K562 (cell line): ENCODE measurements at regions of chr1 and their contacts with region 1.

Region 1: DNA sequence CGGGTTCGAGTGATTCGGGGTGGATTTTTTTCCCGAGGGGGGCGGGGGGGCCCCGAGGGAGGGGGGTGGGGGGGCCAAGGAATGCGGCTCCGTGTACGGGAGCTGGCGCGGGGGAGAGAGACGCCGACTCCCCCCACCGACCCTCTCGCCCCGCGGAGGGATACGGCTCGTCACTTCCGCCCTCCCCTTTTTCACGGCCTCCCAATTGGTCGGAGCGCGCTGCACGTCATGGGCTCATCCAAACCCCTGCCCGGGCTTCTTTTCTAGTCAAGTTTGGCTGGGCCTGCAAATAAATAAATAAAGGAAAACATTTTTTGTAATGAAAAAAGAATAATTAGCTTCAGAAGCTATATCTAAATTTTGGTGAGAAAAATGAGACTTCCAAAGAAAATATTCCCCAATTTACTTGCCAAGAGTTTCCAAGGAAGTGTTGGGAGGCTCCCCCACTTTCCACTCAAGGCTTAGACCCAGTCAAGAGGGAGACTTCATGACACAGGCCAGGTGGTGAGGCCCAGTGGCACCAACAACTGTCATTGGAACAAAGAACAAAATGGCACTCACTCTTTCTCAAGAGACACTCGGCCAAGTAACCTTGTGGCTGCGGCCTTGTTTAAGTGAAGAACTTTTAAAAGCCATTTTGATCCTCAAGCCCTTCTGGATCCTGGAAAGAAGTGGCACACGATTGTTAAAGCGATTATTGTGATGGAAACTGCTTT is at the start of gene POGZ:
- DNase-seq: peak; percentile 89 to 96 (median 93)
- ATAC-seq: peak; percentile 88
- H3K4me3 ChIP-seq: peak within 1 kb of the TSS; percentile 59
- H3K27ac ChIP-seq: peak within 1 kb of the TSS; percentile 90
- H3K4me1 ChIP-seq: peaks cover 0 to 20% of the 10 kb centered on the region in 2 experiments; a peak in 4 of 5 replicates
- H3K27me3 ChIP-seq: no peaks in the 10 kb centered on the region
- CTCF ChIP-seq: no peak
- EP300 ChIP-seq: no peak
- POLR2A ChIP-seq: no peak; the same call in 1 of the 2 replicates
- RAD21 ChIP-seq: no peak
- polyA plus RNA-seq, gene POGZ: 9.4 to 13.7 TPM

Region 2: GRCh38 chr1:151443846-151444782 is 15.4 kb before region 1 on chr1:
- CTCF ChIA-PET with region 1: no interaction called
- POLR2A ChIA-PET with region 1: interaction called, 12 read pairs
- in situ Hi-C with region 1: no loop called
- intact Hi-C with region 1: no loop called
- DNase-seq: peak; percentile 54 to 73 (median 62)
- ATAC-seq: peak; percentile 96
- H3K4me3 ChIP-seq: no peak overlapping the region
- H3K27ac ChIP-seq: no peak overlapping the region
- H3K4me1 ChIP-seq: peaks cover 0 to 3% of the 10 kb centered on the region in 2 experiments; a peak in 2 of 5 replicates
- H3K27me3 ChIP-seq: no peaks in the 10 kb centered on the region
- CTCF ChIP-seq: peak; percentile 71 to 88 (median 78)
- EP300 ChIP-seq: no peak
- POLR2A ChIP-seq: no peak
- RAD21 ChIP-seq: peak; percentile 82 to 83

Region 3: GRCh38 chr1:151472856-151473731 is 13.6 kb after region 1 on chr1:
- CTCF ChIA-PET with region 1: no interaction called
- POLR2A ChIA-PET with region 1: interaction called, 13 read pairs
- in situ Hi-C with region 1: no loop called
- intact Hi-C with region 1: loop called (anchors 1 kb)
- DNase-seq: peak; percentile 41 to 59 (median 48)
- ATAC-seq: peak; percentile 78
- H3K4me3 ChIP-seq: no peak overlapping the region
- H3K27ac ChIP-seq: peak overlapping the region; percentile 53; the same call in 2 of the 3 replicates
- H3K4me1 ChIP-seq: peaks cover 5 to 7% of the 10 kb centered on the region in 2 experiments; a peak in 3 of 5 replicates
- H3K27me3 ChIP-seq: no peaks in the 10 kb centered on the region
- CTCF ChIP-seq: no peak
- EP300 ChIP-seq: no peak
- POLR2A ChIP-seq: no peak
- RAD21 ChIP-seq: no peak

Region 4: GRCh38 chr1:151534665-151535278 is 75.3 kb after region 1 on chr1:
- CTCF ChIA-PET with region 1: no interaction called
- POLR2A ChIA-PET with region 1: no interaction called
- in situ Hi-C with region 1: no loop called
- intact Hi-C with region 1: loop called (anchors 5 kb)
- DNase-seq: peak; percentile 76 to 84 (median 80)
- ATAC-seq: peak; percentile 86
- H3K4me3 ChIP-seq: no peak overlapping the region
- H3K27ac ChIP-seq: no peak overlapping the region
- H3K4me1 ChIP-seq: peaks cover 7 to 17% of the 10 kb centered on the region in 2 experiments; a peak in 4 of 5 replicates
- H3K27me3 ChIP-seq: peaks cover 17 to 20% of the 10 kb centered on the region in 2 experiments; a peak in 4 of 5 replicates
- CTCF ChIP-seq: peak; percentile 89 to 95 (median 95)
- EP300 ChIP-seq: no peak
- POLR2A ChIP-seq: no peak
- RAD21 ChIP-seq: peak; percentile 87 to 90

Region 5: DNA sequence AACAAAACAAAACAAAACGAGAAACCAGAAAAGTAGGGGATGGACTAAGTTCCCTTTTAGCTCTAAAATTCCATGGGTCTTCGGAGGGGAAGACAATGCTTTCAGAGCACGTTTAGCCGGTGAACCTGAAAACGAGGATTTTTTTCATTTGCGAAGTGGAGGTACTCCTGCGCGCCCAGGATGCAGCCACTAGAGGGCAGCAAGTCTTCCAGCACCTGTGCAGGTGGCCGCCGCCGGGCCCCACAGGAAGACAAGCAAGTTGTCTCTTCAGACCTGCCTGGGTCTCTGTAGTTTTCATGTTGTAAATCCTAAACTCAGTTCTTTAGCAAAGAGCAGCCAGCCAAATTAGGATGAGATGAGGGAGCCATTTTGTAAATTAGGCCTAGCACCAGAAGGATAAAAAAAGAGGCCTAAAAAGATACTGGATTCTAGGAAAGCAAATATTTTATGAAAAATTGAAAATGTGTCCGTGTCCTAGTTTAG is 134.7 kb after region 1 on chr1:
- CTCF ChIA-PET with region 1: no interaction called
- POLR2A ChIA-PET with region 1: no interaction called
- in situ Hi-C with region 1: no loop called
- intact Hi-C with region 1: loop called (anchors 10 kb)
- DNase-seq: peak; percentile 74 to 83 (median 78)
- ATAC-seq: peak; percentile 91
- H3K4me3 ChIP-seq: no peak overlapping the region
- H3K27ac ChIP-seq: no peak overlapping the region
- H3K4me1 ChIP-seq: peaks cover 11 to 20% of the 10 kb centered on the region in 2 experiments
- H3K27me3 ChIP-seq: no peaks in the 10 kb centered on the region
- CTCF ChIP-seq: peak; percentile 89 to 97 (median 89)
- EP300 ChIP-seq: no peak
- POLR2A ChIP-seq: no peak
- RAD21 ChIP-seq: peak; percentile 59 to 81

Region 6: GRCh38 chr1:151846062-151846568 is 386.6 kb after region 1 on chr1:
- CTCF ChIA-PET with region 1: no interaction called
- POLR2A ChIA-PET with region 1: no interaction called
- in situ Hi-C with region 1: no loop called
- intact Hi-C with region 1: no loop called
- DNase-seq: peak; percentile 47 to 72 (median 56)
- ATAC-seq: peak; percentile 92
- H3K4me3 ChIP-seq: no peak overlapping the region
- H3K27ac ChIP-seq: peak overlapping the region; percentile 44; the same call in 1 of the 3 replicates
- H3K4me1 ChIP-seq: peaks cover 5 to 9% of the 10 kb centered on the region in 2 experiments; a peak in 3 of 5 replicates
- H3K27me3 ChIP-seq: peaks cover 21 to 39% of the 10 kb centered on the region in 2 experiments
- CTCF ChIP-seq: peak; percentile 35 to 46 (median 39); a peak in 3 of 6 replicates
- EP300 ChIP-seq: no peak
- POLR2A ChIP-seq: no peak
- RAD21 ChIP-seq: peak in 1 of 2 experiments; percentile 41; a peak in 2 of 4 replicates